Transverse colon (tissue), 4 donors: ENCODE measurements at regions of chr5 and their contacts with region 1.

Region 1: DNA sequence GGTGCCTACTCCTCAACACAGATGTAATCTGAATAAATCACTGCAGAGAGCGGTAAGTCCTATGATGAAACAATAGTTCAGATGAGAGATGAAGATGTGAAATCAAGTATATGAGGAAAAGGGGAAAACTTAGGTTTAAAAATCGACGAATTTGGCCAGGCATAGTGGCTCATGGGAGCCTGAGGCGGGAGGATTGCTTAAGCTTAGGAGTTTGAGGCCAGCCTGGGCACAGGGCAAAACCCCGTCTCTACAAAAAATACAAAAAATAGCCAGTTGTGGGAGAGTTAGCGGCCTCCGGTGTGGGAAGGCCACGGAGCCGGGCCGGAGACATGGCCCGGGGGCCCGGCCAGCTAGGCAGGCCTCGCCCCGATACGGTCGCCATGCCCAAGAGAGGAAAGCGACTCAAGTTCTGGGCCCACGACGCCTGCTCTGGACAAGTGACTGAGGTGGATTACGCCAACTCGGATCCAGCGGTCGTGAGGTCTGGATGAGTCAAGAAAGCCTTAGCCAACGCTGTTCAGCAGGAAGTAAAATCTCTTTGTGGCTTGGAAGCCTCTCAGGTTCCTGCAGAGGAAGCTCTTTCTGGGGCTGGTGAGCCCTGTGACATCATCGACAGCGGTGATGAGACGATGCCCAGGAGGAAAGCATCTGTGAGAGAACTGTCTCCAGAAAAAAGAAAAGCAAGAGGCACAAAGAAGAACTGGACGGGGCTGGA is 62.8 kb upstream of the SUB1 start:
- DNase-seq: peak; percentile 21
- H3K4me3 ChIP-seq: no peak overlapping the region
- H3K27ac ChIP-seq: no peak overlapping the region
- H3K4me1 ChIP-seq: no peaks in the 10 kb centered on the region
- H3K27me3 ChIP-seq: no peaks in the 10 kb centered on the region
- CTCF ChIP-seq: no peak
- EP300 ChIP-seq: no peak
- POLR2A ChIP-seq: no peak

Region 2: DNA sequence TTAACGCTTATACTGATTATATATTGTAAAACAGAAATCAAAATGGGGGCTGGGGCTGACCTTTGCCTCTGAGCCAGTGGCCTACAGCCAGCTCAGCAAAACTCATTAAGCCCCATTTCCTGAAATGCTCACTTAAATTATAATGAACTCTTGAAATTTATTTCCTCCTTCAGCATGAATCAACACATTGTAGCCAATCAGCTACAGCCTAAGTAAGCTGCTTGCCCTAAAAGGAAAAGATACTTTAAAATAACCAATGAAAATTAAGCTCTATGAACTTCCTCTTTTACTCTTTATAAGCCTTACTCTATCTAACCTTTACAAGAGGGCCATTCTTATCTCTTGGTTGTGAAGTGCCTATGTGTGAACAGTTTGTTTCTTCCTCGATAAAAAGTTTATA is 29.3 kb after region 1 on chr5:
- in situ Hi-C with region 1: no loop called
- intact Hi-C with region 1: loop called (anchors 1 kb)
- DNase-seq: no peak
- H3K4me3 ChIP-seq: no peak overlapping the region
- H3K27ac ChIP-seq: no peak overlapping the region
- H3K4me1 ChIP-seq: no peaks in the 10 kb centered on the region
- H3K27me3 ChIP-seq: no peaks in the 10 kb centered on the region
- CTCF ChIP-seq: no peak
- EP300 ChIP-seq: no peak
- POLR2A ChIP-seq: no peak

Region 3: GRCh38 chr5:32562843-32563242 is 40.3 kb after region 1 on chr5:
- in situ Hi-C with region 1: no loop called
- intact Hi-C with region 1: no loop called
- DNase-seq: no peak
- H3K4me3 ChIP-seq: no peak overlapping the region
- H3K27ac ChIP-seq: no peak overlapping the region
- H3K4me1 ChIP-seq: peaks cover 0 to 9% (median 4%) of the 10 kb centered on the region in 4 donors
- H3K27me3 ChIP-seq: no peaks in the 10 kb centered on the region
- CTCF ChIP-seq: no peak
- EP300 ChIP-seq: no peak
- POLR2A ChIP-seq: no peak